WTC11 (cell line): ENCODE measurements at regions of chr9 and their contacts with region 1.

Region 1: DNA sequence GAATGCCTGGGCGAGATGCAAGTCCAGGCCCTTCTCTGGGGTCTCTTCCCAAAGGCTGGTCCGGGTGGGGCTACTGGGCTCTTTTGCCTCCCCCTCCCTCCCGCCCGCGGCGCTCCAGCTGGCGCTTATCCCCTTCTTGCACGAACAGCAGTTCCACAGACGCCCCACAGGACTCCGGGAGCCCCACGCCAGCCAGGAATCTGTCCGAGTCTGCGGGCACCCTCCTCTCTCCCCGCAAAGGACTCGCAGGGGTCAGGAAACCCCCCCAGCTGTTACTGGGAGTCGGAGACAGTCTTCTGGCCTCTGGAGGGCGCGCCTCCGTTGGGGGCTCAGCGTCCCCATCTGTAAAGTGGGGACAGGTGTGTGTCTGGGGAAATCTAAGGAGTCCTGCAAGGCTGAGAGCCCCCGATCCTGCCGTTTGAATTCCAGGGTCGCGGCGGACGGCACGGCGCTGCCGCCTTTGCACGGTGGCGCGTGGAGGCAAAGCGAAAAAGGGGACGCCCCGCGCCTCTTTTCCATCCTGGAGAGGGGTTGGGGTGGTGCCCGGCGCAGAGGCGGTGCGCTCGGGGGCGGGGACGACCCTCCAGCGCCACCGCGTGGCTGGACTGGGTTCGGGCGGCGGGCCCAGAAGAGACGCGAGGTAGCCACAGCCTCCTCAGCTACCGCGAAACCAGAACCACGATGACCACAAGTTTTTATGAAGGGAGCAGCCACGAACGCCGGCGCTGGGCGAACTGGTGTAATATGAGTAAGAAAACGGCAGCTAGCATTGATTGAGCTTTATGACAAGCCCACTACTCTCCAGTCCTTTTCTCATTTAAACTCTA is 2.9 kb upstream of the CCIN start:
- DNase-seq: peak; percentile 85
- ATAC-seq: peak; percentile 66
- H3K4me3 Mint-ChIP-seq: peak overlapping the region; percentile 68
- H3K27ac Mint-ChIP-seq: no peak overlapping the region
- H3K4me1 Mint-ChIP-seq: peaks cover 44% of the 10 kb centered on the region
- H3K27me3 Mint-ChIP-seq: peaks cover 7% of the 10 kb centered on the region
- CTCF ChIP-seq: peak; percentile 86

Region 2: GRCh38 chr9:36127652-36128244 is 38.6 kb before region 1 on chr9:
- CTCF ChIA-PET with region 1: interaction called, 16 read pairs
- POLR2A ChIA-PET with region 1: interaction called, 3 read pairs
- DNase-seq: no peak
- ATAC-seq: no peak
- H3K4me3 Mint-ChIP-seq: no peak overlapping the region
- H3K27ac Mint-ChIP-seq: no peak overlapping the region
- H3K4me1 Mint-ChIP-seq: peaks cover 9% of the 10 kb centered on the region
- H3K27me3 Mint-ChIP-seq: peaks cover 21% of the 10 kb centered on the region
- CTCF ChIP-seq: no peak

Region 3: DNA sequence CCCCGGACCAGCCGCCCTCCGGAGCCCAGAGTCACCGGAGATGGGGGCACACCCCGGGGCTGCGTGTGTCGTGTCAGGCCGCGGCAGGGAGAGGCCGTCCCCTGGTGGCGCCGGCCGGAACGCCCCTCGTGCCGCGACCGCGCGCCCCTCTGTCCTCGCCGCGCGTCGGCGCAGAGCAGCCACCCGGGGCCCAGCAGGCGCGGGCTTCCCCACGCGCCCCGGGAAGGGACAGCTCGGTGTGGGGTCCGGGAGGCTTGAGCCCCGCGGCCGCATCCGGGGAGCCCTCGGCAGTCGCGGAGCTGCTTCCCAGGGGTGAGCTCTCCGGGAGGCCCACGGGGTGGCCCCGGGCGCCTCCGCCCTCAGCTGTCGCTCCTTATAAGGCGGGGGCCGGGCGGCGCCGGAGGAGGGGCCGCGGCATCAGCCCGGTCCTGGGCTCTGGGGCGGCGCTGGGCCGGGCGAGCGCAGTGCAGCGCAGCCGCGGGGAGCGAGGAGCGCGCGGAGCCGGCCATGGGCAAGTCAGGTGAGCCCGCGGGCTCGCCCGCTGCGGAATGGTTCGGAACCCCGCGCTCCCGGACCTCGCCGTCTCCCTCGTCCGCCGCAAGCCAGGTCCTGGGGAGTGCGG is 29.9 kb before region 1 on chr9 and contains the start of gene GLIPR2:
- CTCF ChIA-PET with region 1: interaction called, 14 read pairs
- POLR2A ChIA-PET with region 1: interaction called, 7 read pairs
- DNase-seq: peak; percentile 60
- ATAC-seq: peak; percentile 82
- H3K4me3 Mint-ChIP-seq: peak within 1 kb of the TSS; percentile 83
- H3K27ac Mint-ChIP-seq: no peak within 1 kb of the TSS
- H3K4me1 Mint-ChIP-seq: peaks cover 34% of the 10 kb centered on the region
- H3K27me3 Mint-ChIP-seq: peaks cover 88% of the 10 kb centered on the region
- CTCF ChIP-seq: no peak
- total RNA-seq, gene GLIPR2: 3.7 to 6.3 TPM (median 5.3 TPM) in 3 replicates

Region 4: DNA sequence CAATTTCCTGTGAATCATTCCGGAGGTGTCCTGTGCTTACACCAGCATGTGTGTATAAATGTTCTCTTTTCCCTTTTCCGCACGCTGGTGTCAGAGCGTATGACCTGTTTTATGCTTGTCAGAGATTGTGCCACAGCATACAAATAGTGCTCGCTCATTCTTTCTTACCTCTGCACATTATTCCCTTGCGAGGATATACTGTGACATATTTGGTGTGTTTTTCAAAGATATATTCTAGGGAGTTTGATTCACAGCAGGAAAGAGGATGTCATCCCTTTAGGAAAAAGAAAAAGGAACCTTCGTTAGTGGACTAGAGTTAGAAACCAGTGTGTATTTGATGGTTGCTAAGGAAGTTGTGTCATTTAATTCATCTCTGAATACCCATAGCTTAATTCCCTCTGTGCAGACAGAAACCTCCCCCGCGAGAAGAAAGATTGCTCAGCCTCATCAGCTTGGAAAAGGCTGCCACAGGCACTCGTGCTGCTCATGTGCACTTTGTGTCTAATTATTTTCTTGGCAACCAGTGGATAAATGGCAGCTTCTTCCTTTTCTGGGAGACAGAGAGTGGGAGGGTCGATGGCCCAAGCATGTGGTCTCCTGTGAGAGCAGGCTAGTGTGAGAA is 11.9 kb before region 1 on chr9:
- CTCF ChIA-PET with region 1: interaction called, 11 read pairs
- POLR2A ChIA-PET with region 1: interaction called, 8 read pairs
- DNase-seq: no peak
- ATAC-seq: no peak
- H3K4me3 Mint-ChIP-seq: no peak overlapping the region
- H3K27ac Mint-ChIP-seq: 0 out of 2 replicates have a peak overlapping the region, but pooled peaks have one; percentile 15
- H3K4me1 Mint-ChIP-seq: peaks cover 6% of the 10 kb centered on the region; the same call in 1 of the 2 replicates
- H3K27me3 Mint-ChIP-seq: no peaks in the 10 kb centered on the region
- CTCF ChIP-seq: no peak

Region 5: DNA sequence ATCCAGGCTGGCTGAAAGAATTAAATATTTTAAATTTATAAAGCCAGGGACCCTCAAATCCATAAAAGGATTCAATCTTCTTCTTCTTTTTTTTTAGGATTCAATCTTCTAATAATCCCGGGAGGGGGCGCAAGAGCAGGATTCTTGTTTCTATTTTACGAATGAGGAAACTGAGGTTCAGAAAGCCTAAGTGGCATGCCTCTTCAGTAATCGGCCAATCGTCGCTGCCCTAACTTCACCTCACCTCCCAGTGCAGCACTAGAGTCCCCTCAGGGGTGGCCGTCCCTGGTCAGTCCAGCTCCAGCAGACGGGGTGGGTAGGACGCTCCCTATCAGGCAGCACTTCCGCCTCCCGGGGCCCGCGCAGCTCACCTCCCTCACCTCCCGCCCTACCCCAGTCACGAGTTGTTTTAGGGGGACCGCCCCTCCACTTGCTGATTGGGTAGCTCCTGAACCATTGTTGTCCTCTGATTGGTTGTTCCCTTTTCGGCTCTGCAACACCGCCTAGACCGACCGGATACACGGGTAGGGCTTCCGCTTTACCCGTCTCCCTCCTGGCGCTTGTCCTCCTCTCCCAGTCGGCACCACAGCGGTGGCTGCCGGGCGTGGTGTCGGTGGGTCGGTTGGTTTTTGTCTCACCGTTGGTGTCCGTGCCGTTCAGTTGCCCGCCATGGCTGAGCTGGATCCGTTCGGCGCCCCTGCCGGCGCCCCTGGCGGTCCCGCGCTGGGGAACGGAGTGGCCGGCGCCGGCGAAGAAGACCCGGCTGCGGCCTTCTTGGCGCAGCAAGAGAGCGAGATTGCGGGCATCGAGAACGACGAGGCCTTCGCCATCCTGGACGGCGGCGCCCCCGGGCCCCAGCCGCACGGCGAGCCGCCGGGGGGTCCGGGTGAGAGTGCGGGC is 24.3 kb after region 1 on chr9 and contains the start of gene CLTA:
- CTCF ChIA-PET with region 1: interaction called, 26 read pairs
- POLR2A ChIA-PET with region 1: interaction called, 24 read pairs
- DNase-seq: peak; percentile 96
- ATAC-seq: peak; percentile 97
- H3K4me3 Mint-ChIP-seq: peak within 1 kb of the TSS; percentile 97
- H3K27ac Mint-ChIP-seq: peak within 1 kb of the TSS; percentile 93
- H3K4me1 Mint-ChIP-seq: peaks cover 34% of the 10 kb centered on the region
- H3K27me3 Mint-ChIP-seq: peaks cover 18% of the 10 kb centered on the region
- CTCF ChIP-seq: peak; percentile 22; the same call in 1 of the 2 replicates
- total RNA-seq, gene CLTA: 213 to 220 TPM (median 220 TPM) in 3 replicates